ENCODE measurements at regions of chr10 and their contacts with region 1.

Region 1: GRCh38 chr10:84537447-84537931 is 209.1 kb downstream of the CCSER2 start:
- DNase-seq: peak; percentile 45
- H3K4me3 Mint-ChIP-seq: no peak overlapping the region
- H3K27ac Mint-ChIP-seq: no peak overlapping the region
- H3K4me1 Mint-ChIP-seq: peaks cover 27% of the 10 kb centered on the region
- H3K27me3 Mint-ChIP-seq: peaks cover 16% of the 10 kb centered on the region

Region 2: DNA sequence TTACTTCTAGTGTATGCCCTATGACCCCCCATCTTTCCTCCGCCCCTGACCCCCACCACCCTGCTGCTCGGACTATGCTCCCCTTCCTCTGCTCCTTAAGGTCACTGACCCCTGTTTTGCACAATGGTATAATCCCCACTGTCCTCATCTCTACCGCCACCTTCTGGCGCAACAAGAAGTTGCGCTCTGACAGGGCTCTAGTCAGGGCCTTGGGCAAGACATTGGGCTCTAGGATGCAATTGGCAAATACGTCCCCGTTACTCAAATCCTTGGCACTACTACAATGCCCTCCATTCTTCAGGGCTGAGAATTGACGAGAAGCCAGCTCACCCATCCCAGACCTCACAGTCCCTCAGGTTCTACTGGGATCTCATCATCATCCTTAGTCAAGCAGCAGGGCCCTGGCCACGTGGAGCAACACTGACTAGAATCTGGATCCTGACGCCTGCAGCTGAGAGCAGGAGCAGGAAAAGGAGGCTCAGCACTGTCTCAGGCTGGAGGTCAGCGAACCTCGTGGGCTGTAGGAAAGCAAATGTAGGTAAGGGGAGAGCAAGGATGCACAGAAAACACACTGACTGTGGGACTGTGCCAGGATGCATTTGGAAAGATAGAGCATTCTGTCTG is 322.8 kb before region 1 on chr10:
- CTCF ChIA-PET with region 1: interaction called, 12 read pairs
- intact Hi-C with region 1: no loop called
- DNase-seq: peak; percentile 63
- H3K4me3 Mint-ChIP-seq: no peak overlapping the region
- H3K27ac Mint-ChIP-seq: no peak overlapping the region
- H3K4me1 Mint-ChIP-seq: no peaks in the 10 kb centered on the region
- H3K27me3 Mint-ChIP-seq: no peaks in the 10 kb centered on the region

Region 3: DNA sequence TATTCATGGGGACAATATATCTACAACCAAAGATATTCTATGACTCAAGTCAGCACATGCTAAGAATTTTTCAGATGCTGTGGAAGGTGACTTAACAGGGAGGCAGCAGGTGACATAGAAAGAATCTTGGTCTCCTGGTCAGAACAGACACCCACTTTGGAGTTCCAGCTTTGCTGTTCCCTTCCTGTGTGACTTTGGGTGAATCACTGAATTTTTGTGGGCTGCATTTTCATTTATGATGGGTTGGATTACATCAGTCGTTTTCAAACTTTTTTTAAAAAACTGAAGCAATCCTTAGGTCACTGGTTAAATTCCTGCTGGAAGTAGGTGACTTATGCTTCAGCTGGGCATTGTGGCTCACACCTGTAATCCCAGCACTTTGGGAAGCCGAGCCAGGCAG is 267.7 kb before region 1 on chr10:
- CTCF ChIA-PET with region 1: interaction called, 261 read pairs
- intact Hi-C with region 1: loop called (anchors 1 kb)
- DNase-seq: peak; percentile 17
- H3K4me3 Mint-ChIP-seq: no peak overlapping the region
- H3K27ac Mint-ChIP-seq: no peak overlapping the region
- H3K4me1 Mint-ChIP-seq: peaks cover 32% of the 10 kb centered on the region
- H3K27me3 Mint-ChIP-seq: peaks cover 7% of the 10 kb centered on the region

Region 4: GRCh38 chr10:84341538-84341856 is 196.0 kb before region 1 on chr10:
- CTCF ChIA-PET with region 1: interaction called, 5 read pairs
- intact Hi-C with region 1: loop called (anchors 1 kb)
- DNase-seq: peak; percentile 67
- H3K4me3 Mint-ChIP-seq: peak overlapping the region; percentile 59
- H3K27ac Mint-ChIP-seq: peak overlapping the region; percentile 77
- H3K4me1 Mint-ChIP-seq: peaks cover 51% of the 10 kb centered on the region
- H3K27me3 Mint-ChIP-seq: no peaks in the 10 kb centered on the region

Region 5: GRCh38 chr10:84429926-84430520 is 107.5 kb before region 1 on chr10:
- CTCF ChIA-PET with region 1: interaction called, 54 read pairs
- intact Hi-C with region 1: loop called (anchors 1 kb)
- DNase-seq: peak; percentile 86
- H3K4me3 Mint-ChIP-seq: no peak overlapping the region
- H3K27ac Mint-ChIP-seq: no peak overlapping the region
- H3K4me1 Mint-ChIP-seq: peaks cover 23% of the 10 kb centered on the region
- H3K27me3 Mint-ChIP-seq: no peaks in the 10 kb centered on the region

Region 6: GRCh38 chr10:84563868-84564267 is 26.4 kb after region 1 on chr10:
- CTCF ChIA-PET with region 1: interaction called, 12 read pairs
- intact Hi-C with region 1: no loop called
- DNase-seq: no peak
- H3K4me3 Mint-ChIP-seq: no peak overlapping the region
- H3K27ac Mint-ChIP-seq: no peak overlapping the region
- H3K4me1 Mint-ChIP-seq: peaks cover 3% of the 10 kb centered on the region
- H3K27me3 Mint-ChIP-seq: peaks cover 25% of the 10 kb centered on the region

Region 7: DNA sequence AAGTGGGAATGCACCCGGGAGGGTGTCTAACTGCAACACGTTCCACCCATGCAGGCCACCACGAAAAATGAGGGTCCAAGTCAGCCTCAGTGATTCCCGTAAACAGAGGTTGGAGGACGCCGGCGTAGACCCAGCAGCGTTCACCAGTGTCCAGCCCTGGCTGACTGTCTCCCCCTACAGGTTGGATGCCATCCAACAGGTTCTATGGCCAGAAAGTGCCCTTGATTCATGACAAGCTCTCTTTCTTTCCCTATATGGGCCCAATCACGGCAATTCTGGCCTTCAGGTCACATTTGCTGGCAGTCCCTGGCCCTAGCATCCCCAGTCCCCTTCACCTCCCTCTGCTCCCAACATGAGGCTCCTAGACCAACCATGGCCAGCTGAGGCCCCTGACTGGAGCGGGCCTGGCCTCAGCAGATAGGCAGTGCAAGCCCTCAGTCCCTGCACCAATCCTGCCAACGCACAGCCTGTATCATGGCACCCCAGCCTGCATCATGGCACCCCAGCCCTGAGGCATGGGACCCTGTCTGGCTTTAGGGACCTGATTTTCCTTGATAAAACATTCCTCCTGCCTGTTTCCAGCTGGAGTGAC is 1601.7 kb after region 1 on chr10:
- CTCF ChIA-PET with region 1: no interaction called
- intact Hi-C with region 1: loop called (anchors 2 kb)
- DNase-seq: peak; percentile 52
- H3K4me3 Mint-ChIP-seq: no peak overlapping the region
- H3K27ac Mint-ChIP-seq: no peak overlapping the region
- H3K4me1 Mint-ChIP-seq: no peaks in the 10 kb centered on the region
- H3K27me3 Mint-ChIP-seq: no peaks in the 10 kb centered on the region

Measured in activated naive CD4-positive, alpha-beta T cell treated with anti-CD3 and anti-CD28 coated beads for 36 hours (primary cell).